ENCODE measurements at regions of chr20 and their contacts with region 1.

Region 1: GRCh38 chr20:39036011-39036410 is 73.9 kb downstream of the DHX35 start:
- DNase-seq: no peak
- ATAC-seq: no peak
- H3K4me3 ChIP-seq: no peak overlapping the region
- H3K27ac ChIP-seq: no peak overlapping the region
- H3K4me1 ChIP-seq: no peaks in the 10 kb centered on the region
- CTCF ChIP-seq: no peak
- EP300 ChIP-seq: no peak
- POLR2A ChIP-seq: no peak
- RAD21 ChIP-seq: no peak

Region 2: GRCh38 chr20:39025883-39026282 is 10.1 kb before region 1 on chr20:
- CTCF ChIA-PET with region 1: interaction called, 4 read pairs
- POLR2A ChIA-PET with region 1: interaction called, 10 read pairs
- DNase-seq: no peak
- ATAC-seq: no peak
- H3K4me3 ChIP-seq: no peak overlapping the region
- H3K27ac ChIP-seq: no peak overlapping the region
- H3K4me1 ChIP-seq: no peaks in the 10 kb centered on the region
- CTCF ChIP-seq: no peak
- EP300 ChIP-seq: no peak
- POLR2A ChIP-seq: no peak
- RAD21 ChIP-seq: no peak

Region 3: GRCh38 chr20:39066471-39067242 is 30.6 kb after region 1 on chr20:
- CTCF ChIA-PET with region 1: no interaction called
- POLR2A ChIA-PET with region 1: no interaction called
- DNase-seq: no peak
- ATAC-seq: no peak
- H3K4me3 ChIP-seq: no peak overlapping the region
- H3K27ac ChIP-seq: no peak overlapping the region
- H3K4me1 ChIP-seq: no peaks in the 10 kb centered on the region
- CTCF ChIP-seq: no peak
- EP300 ChIP-seq: no peak
- POLR2A ChIP-seq: no peak
- RAD21 ChIP-seq: no peak

Measured in A549 (cell line).